MCF 10A (cell line): ENCODE measurements at regions of chr4 and their contacts with region 1.

Region 1: GRCh38 chr4:168923526-168924194 is 86.4 kb downstream of the CBR4 start:
- DNase-seq: peak; percentile 78
- H3K4me3 Mint-ChIP-seq: no peak overlapping the region
- H3K27ac Mint-ChIP-seq: no peak overlapping the region
- H3K4me1 Mint-ChIP-seq: peaks cover 6% of the 10 kb centered on the region
- H3K27me3 Mint-ChIP-seq: no peaks in the 10 kb centered on the region
- CTCF ChIP-seq: peak; percentile 71

Region 2: DNA sequence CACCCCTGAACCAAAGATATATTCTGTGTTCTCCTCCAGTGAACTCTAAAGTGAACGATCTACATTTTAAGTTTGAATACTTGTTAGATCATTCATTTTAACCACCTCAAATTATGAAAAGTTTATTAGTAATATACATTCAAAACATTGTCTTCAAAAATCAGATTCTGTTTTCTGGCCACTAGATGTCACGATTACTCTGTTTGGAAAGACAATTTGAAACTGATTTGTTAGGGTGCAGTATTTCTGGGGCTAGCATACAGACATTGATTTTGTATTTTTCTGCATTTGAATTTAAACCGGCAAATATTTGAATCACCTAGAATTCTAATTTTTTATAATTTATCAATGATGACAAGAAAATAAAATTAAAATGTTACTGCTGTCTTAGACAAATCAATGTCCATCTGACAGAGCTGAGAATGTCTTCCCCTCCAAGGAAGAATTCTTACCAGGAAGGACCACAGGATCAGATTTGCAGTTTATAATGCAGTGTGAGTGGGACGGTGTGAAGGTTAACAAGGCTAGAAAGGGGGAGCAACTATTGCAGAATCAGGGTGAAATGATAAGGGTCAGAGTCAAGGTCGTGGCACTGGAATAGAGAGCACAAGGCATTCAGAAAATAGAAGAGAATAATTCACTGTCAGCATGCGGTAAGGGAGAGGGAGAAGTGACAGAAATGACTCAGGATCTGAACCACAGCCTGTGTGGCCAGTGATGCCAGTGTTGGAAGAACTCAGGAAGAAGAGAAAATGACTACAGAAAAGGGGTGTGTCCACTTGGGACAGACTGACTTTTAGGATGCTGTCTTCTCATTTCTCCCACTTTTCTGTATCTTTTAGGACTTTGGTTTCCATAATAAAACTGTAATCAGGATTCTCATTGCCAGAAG is 739.7 kb before region 1 on chr4:
- CTCF ChIA-PET with region 1: interaction called, 8 read pairs
- POLR2A ChIA-PET with region 1: no interaction called
- intact Hi-C with region 1: loop called (anchors 2 kb)
- DNase-seq: peak; percentile 50
- H3K4me3 Mint-ChIP-seq: no peak overlapping the region
- H3K27ac Mint-ChIP-seq: peak overlapping the region; percentile 4
- H3K4me1 Mint-ChIP-seq: no peaks in the 10 kb centered on the region
- H3K27me3 Mint-ChIP-seq: no peaks in the 10 kb centered on the region
- CTCF ChIP-seq: peak; percentile 66

Region 3: DNA sequence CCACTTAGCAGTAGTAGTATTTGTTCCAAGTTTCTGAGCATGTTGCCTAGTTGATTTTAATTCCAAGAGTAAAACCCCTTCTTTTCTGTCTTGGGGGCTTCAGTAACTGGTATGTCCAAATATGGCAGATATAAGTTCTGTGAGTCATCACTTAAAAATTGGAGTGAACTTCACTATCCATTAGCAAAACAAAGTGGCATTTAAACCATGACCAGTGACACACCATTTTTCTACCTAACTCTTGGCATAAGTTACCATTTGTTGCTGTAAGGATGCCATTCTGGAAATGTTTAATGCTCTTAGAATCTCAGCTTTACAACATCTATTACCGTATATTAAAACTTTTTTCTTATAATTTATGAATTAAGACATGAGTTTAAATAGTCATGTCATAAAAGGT is 15.6 kb before region 1 on chr4:
- CTCF ChIA-PET with region 1: interaction called, 34 read pairs
- POLR2A ChIA-PET with region 1: no interaction called
- intact Hi-C with region 1: no loop called
- DNase-seq: no peak
- H3K4me3 Mint-ChIP-seq: no peak overlapping the region
- H3K27ac Mint-ChIP-seq: peak overlapping the region; percentile 57
- H3K4me1 Mint-ChIP-seq: peaks cover 6% of the 10 kb centered on the region
- H3K27me3 Mint-ChIP-seq: no peaks in the 10 kb centered on the region
- CTCF ChIP-seq: no peak

Region 4: DNA sequence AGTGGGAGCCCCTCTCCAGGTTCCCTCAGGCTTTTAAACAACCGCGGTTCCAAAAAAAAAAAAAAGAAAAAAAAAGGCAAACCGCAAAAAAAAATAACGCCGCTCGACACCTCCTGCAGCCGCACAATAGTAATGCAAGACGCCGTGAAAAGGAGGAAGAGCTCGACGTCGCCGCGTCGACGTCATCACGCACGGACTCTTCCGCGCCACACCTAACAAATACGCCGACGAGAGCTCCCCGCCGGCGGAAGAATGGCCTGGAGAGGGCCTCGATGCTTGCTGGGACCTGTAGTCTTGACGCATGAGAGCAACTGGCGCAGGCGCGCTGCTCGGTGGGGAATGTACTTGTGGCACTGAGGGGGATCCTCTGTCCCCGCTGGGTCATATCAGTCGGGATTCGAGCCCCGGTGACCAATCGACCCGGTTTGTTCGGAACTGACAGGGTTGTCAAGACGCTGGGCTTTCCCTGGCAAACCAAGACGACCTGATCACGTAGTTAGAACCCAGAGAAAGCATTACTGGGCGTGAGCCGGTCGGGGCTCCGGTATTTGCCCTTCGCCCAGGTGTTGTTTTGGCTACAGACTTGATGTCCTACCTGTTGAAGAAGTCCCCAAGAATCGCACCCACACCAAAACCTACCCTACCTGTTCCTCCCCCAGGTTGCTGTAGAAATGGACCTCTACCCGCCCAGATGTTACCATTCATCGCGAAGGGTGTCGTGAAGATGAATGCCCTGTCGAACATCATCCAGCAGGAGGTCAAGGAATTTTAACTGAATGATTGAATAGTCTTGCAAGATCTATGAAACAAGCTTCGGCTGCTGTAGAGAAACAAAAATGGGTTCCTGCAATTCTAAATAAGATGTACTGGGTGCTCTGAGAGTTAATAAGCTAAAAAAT is 86.7 kb after region 1 on chr4 and contains the start of gene CBR4:
- CTCF ChIA-PET with region 1: interaction called, 7 read pairs
- POLR2A ChIA-PET with region 1: interaction called, 6 read pairs
- intact Hi-C with region 1: loop called (anchors 1 kb)
- DNase-seq: peak; percentile 98
- H3K4me3 Mint-ChIP-seq: peak within 1 kb of the TSS; percentile 94
- H3K27ac Mint-ChIP-seq: peak within 1 kb of the TSS; percentile 97
- H3K4me1 Mint-ChIP-seq: peaks cover 30% of the 10 kb centered on the region
- H3K27me3 Mint-ChIP-seq: no peaks in the 10 kb centered on the region
- CTCF ChIP-seq: peak; percentile 34
- total RNA-seq, gene CBR4: 19.2 and 24.0 TPM in 2 replicates

Region 5: DNA sequence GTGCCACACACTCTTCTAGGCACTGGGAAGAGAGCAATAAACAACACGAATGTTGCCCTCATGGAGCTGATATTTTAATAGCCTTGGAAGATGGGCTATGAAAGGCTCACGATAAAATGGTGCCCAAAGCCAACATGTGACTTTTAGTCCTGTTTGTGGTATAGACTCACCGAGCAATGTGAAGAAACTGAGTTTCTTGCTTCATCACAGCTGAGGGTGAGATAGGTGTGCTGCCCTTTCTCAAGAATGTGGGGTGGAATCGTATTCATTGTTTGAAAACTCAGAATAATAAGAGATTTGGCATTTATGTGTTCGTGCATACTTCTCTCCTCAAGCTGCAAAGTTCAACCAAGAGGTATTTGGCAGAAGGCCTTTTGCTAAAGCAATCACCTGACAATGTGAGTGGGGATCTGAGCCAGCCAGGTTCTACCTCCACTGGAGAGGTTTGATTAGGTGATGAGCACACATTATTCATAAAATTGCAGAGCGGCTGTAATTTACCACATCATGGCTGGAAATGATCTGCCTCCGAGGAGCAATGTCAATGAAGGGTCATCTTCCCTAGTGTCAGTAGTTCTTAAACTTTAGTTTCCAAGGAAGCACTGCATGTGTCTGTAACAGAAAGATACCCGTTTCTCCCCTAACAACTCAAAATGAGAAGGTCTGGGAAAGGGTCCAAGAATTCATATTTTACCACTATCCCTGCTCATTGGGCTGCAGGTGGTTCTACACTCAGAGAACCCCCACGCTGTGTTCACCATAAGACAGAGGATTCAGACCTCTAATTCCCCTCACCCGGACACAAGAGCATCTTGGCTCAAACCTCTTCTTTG is 128.3 kb after region 1 on chr4:
- CTCF ChIA-PET with region 1: no interaction called
- POLR2A ChIA-PET with region 1: no interaction called
- intact Hi-C with region 1: no loop called
- DNase-seq: no peak
- H3K4me3 Mint-ChIP-seq: no peak overlapping the region
- H3K27ac Mint-ChIP-seq: no peak overlapping the region
- H3K4me1 Mint-ChIP-seq: no peaks in the 10 kb centered on the region
- H3K27me3 Mint-ChIP-seq: no peaks in the 10 kb centered on the region
- CTCF ChIP-seq: no peak

Region 6: DNA sequence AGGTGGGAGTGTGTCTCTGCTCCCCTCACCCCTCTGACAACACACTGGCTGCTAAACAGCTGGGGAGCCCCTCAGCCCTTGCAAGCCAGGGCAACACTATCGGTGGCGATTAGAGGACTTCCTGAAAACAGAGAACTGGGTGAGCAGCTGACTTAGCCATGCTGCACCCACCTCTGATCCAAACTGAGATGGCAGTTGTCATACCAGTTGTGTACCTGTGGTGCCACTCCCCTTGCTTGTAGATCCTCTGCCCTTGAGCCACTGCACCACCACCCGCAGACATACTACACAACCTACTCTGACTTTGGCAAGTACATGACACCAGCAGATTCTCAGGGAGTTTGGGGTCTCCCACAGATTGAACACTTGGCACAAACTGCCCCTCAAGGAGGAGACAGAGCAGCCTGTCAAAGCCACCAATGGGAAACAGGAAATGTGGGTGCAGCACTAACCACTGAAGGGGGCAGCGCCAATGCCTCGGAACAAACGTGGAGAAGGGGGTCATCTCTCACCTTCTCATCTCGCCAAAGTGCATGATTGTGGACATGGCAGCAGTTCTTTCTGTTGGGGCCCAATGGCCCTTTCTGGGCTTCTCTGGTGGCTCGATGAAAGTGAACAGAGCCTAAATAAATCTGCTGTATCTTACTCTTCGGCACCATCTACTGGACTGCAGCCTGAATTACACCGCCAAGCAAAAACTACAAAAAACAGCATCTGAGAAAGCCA is 568.9 kb after region 1 on chr4:
- CTCF ChIA-PET with region 1: interaction called, 58 read pairs
- POLR2A ChIA-PET with region 1: interaction called, 3 read pairs
- intact Hi-C with region 1: no loop called
- DNase-seq: peak; percentile 61
- H3K4me3 Mint-ChIP-seq: no peak overlapping the region
- H3K27ac Mint-ChIP-seq: no peak overlapping the region
- H3K4me1 Mint-ChIP-seq: no peaks in the 10 kb centered on the region
- H3K27me3 Mint-ChIP-seq: no peaks in the 10 kb centered on the region
- CTCF ChIP-seq: peak; percentile 77

Region 7: GRCh38 chr4:169566021-169566818 is 642.6 kb after region 1 on chr4:
- CTCF ChIA-PET with region 1: interaction called, 33 read pairs
- POLR2A ChIA-PET with region 1: interaction called, 4 read pairs
- intact Hi-C with region 1: loop called (anchors 1 kb)
- DNase-seq: peak; percentile 58
- H3K4me3 Mint-ChIP-seq: no peak overlapping the region
- H3K27ac Mint-ChIP-seq: no peak overlapping the region
- H3K4me1 Mint-ChIP-seq: peaks cover 5% of the 10 kb centered on the region
- H3K27me3 Mint-ChIP-seq: no peaks in the 10 kb centered on the region
- CTCF ChIP-seq: peak; percentile 38